HEK293 (cell line): ENCODE measurements at regions of chr1 and their contacts with region 1.

Region 1: GRCh38 chr1:178501705-178502329 is 5.1 kb upstream of the CLEC20A start:
- H3K4me3 ChIP-seq: no peak overlapping the region
- H3K27ac ChIP-seq: no peak overlapping the region
- H3K4me1 ChIP-seq: no peaks in the 10 kb centered on the region
- CTCF ChIP-seq: peak; percentile 56; the same call in 1 of the 2 replicates

Region 2: GRCh38 chr1:178300352-178300699 is 201.5 kb before region 1 on chr1:
- CTCF ChIA-PET with region 1: interaction called, 29 read pairs
- POLR2A ChIA-PET with region 1: no interaction called
- H3K4me3 ChIP-seq: no peak overlapping the region
- H3K27ac ChIP-seq: no peak overlapping the region
- H3K4me1 ChIP-seq: peaks cover 3% of the 10 kb centered on the region; the same call in 1 of the 2 replicates
- CTCF ChIP-seq: no peak

Region 3: DNA sequence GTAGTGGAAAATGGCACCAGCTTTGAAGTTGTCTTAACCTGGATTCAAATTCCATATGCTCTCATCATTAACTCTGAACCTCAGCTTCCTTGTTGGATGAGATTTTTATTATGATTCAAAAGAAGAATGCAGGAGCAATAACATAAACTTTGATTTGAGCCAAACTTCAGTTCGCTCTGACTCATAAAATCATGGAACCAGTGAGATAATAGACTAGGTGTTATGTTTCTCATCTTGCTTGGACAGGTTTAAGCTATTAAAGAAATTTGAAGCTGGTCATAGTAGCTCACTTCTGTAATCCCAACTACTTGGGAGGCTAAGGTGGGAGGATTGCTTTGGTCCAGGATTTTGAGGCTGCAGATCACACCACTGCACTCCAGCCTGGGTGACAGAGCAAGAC is 177.8 kb before region 1 on chr1:
- CTCF ChIA-PET with region 1: interaction called, 12 read pairs
- POLR2A ChIA-PET with region 1: no interaction called
- H3K4me3 ChIP-seq: no peak overlapping the region
- H3K27ac ChIP-seq: no peak overlapping the region
- H3K4me1 ChIP-seq: no peaks in the 10 kb centered on the region
- CTCF ChIP-seq: no peak

Region 4: DNA sequence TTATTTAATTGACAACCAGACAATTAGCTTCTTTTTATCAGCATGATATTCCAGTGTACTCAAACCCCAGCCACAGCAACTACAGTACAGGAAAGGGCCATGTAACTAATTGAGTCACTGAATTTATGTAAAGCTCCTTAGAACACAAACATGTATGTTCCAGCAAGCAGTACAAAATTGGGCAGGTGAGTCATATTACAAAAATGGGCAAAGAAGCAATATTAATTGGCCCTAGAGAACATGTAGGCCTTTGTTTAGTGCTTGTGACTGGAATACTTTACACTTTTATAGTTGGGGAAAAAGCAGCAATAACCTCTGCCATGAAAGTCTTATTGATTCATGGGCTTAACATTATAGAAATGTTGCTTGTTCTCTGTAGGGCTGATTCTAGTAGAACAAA is 36.8 kb before region 1 on chr1:
- CTCF ChIA-PET with region 1: interaction called, 22 read pairs
- POLR2A ChIA-PET with region 1: no interaction called
- H3K4me3 ChIP-seq: no peak overlapping the region
- H3K27ac ChIP-seq: no peak overlapping the region
- H3K4me1 ChIP-seq: no peaks in the 10 kb centered on the region
- CTCF ChIP-seq: no peak

Region 5: GRCh38 chr1:178484698-178485225 is 17.1 kb before region 1 on chr1:
- CTCF ChIA-PET with region 1: interaction called, 10 read pairs
- POLR2A ChIA-PET with region 1: no interaction called
- H3K4me3 ChIP-seq: no peak overlapping the region
- H3K27ac ChIP-seq: no peak overlapping the region
- H3K4me1 ChIP-seq: no peaks in the 10 kb centered on the region
- CTCF ChIP-seq: no peak

Region 6: GRCh38 chr1:178518894-178519293 is 17.1 kb after region 1 on chr1:
- CTCF ChIA-PET with region 1: interaction called, 52 read pairs
- POLR2A ChIA-PET with region 1: no interaction called
- H3K4me3 ChIP-seq: no peak overlapping the region
- H3K27ac ChIP-seq: no peak overlapping the region
- H3K4me1 ChIP-seq: no peaks in the 10 kb centered on the region
- CTCF ChIP-seq: no peak